Lower leg skin (tissue), 4 donors: ENCODE measurements at regions of chr11 and their contacts with region 1.

Region 1: GRCh38 chr11:34851916-34852315 is 64.3 kb downstream of the APIP start:
- DNase-seq: no peak
- H3K4me3 ChIP-seq: no peak overlapping the region
- CTCF ChIP-seq: no peak
- POLR2A ChIP-seq: no peak

Region 2: GRCh38 chr11:34869426-34869825 is 17.5 kb after region 1 on chr11:
- intact Hi-C with region 1: loop called (anchors 1 kb)
- DNase-seq: no peak
- H3K4me3 ChIP-seq: no peak overlapping the region
- CTCF ChIP-seq: no peak
- POLR2A ChIP-seq: no peak

Region 3: GRCh38 chr11:34907934-34908593 is 56.1 kb after region 1 on chr11:
- intact Hi-C with region 1: no loop called
- DNase-seq: no peak
- H3K4me3 ChIP-seq: no peak overlapping the region
- CTCF ChIP-seq: no peak
- POLR2A ChIP-seq: no peak